Gastrocnemius medialis (tissue), 4 donors: ENCODE measurements at regions of chr14 and their contacts with region 1.

Region 1: DNA sequence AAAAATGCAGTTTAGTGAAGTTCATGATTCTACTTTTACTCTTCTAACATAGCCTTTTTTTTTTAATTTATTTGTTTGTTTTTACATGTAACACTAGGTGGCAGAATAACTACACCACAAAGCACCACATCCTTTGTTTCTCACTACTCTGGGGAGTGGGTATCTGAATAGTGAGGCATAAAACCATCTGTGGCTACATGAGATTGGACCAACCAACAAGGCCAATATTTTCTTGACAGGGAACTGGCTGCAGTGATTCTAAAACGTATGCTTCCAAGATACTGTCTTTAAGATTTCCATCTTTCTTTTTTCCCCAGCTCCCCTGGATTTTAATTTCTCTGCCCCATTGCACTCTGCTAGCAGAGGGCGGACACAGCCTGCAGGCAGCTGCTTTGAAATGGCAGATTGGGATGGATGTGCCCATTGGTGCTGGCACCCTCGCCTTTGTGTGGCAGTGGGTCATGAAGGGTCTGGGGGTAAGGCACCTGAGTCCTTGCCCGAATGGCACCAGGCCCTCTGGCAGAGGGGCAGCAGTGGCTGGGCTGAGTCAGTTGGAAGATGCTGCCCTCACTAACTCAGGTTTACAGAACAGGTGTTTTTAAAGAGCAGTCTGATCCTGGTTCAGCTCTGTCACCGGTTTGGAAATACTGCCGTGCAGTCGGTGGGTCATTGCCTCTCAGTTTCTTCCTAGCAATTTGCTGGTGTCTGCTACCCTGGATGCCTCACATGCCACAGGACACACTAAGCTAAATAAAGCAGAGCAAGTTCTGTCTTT is 429.1 kb downstream of the RAD51B start:
- DNase-seq: peak; percentile 62 to 84
- ATAC-seq: peak; percentile 79 to 85
- H3K4me3 ChIP-seq: no peak overlapping the region
- H3K27ac ChIP-seq: peak overlapping the region; percentile 82 to 87 (median 86)
- H3K4me1 ChIP-seq: peaks cover 64 to 84% of the 10 kb centered on the region in 2 donors
- H3K27me3 ChIP-seq: no peaks in the 10 kb centered on the region
- CTCF ChIP-seq: peak; percentile 60 to 79 (median 70)
- POLR2A ChIP-seq: peak; percentile 10 to 31

Region 2: GRCh38 chr14:68140111-68140741 is 108.4 kb before region 1 on chr14:
- in situ Hi-C with region 1: no loop called
- intact Hi-C with region 1: loop called (anchors 5 kb)
- DNase-seq: peak in 1 of 2 donors; percentile 32
- ATAC-seq: peak; percentile 21 to 35
- H3K4me3 ChIP-seq: no peak overlapping the region
- H3K27ac ChIP-seq: peak overlapping the region; percentile 43 to 70 (median 63)
- H3K4me1 ChIP-seq: peaks cover 48 to 59% of the 10 kb centered on the region in 2 donors
- H3K27me3 ChIP-seq: no peaks in the 10 kb centered on the region
- CTCF ChIP-seq: no peak
- POLR2A ChIP-seq: no peak

Region 3: DNA sequence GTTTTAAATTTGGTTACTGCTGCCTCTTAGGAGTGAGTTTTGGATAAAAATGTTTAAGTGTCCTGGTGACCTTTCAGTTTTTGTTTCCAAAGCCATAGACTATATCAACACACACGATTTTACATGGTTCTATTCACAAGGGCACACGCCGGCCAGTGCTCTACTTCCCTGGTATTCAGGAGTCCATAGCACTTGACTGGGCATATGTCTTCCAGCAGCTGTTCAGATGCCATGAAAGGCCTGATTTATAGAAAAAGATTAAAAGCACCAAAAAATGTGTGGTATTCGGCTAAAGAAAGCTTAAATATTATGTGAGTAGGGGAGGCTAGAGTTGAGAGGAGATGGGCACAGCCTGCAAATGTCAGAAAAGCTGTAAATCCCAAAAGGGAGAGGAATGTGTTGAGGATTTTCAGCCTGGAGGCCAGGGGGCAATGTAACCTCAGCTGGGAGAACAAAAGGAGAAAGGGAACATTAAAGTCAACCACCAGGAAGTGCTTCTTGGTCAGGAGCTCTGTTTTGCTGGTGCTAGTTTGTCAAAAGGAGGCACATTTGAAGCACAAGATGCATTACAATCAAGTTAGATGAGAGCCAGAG is 49.3 kb after region 1 on chr14:
- in situ Hi-C with region 1: no loop called
- intact Hi-C with region 1: no loop called
- DNase-seq: no peak
- ATAC-seq: no peak
- H3K4me3 ChIP-seq: no peak overlapping the region
- H3K27ac ChIP-seq: no peak overlapping the region
- H3K4me1 ChIP-seq: peaks cover 16 to 21% of the 10 kb centered on the region in 2 donors
- H3K27me3 ChIP-seq: no peaks in the 10 kb centered on the region
- CTCF ChIP-seq: no peak
- POLR2A ChIP-seq: no peak

Region 4: GRCh38 chr14:68476212-68476907 is 227.7 kb after region 1 on chr14:
- in situ Hi-C with region 1: no loop called
- intact Hi-C with region 1: loop called (anchors 2 kb)
- DNase-seq: peak; percentile 84 to 89
- ATAC-seq: peak; percentile 95 to 98
- H3K4me3 ChIP-seq: no peak overlapping the region
- H3K27ac ChIP-seq: peak overlapping the region; percentile 84 to 95 (median 86)
- H3K4me1 ChIP-seq: peaks cover 30 to 45% of the 10 kb centered on the region in 2 donors
- H3K27me3 ChIP-seq: no peaks in the 10 kb centered on the region
- CTCF ChIP-seq: no peak
- POLR2A ChIP-seq: peak; percentile 29

Region 5: DNA sequence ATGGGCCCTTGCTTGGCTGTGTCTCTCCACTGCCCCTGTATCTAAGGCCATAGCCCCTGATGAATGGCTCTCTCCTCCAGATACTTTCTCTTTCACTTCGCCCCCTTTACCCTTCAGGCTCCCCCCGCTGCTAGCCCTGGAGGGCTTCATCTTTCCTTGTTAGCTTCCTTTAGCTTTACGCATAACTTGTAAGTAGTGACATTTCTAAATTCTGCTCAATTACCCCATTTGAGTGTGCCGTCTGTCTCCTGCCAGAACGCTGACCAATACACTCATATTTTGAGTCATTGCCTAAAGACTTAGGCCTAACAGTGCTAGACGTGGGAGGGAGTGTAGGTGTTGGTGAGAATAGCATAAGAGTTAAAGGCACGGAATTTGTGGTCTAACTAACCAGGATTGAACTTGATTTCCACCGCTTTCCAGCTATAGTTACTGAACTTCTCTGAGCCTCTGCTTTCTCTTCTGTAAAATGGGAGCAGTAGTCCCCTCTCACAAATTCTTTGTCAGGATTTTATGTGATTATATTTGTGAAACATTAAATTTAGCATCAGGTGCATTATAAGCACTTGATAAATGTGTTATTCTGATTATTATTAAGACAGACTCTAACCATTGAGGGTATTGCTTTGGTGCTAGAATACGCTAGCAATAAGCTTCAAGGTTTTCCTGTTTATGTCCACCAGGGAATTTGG is 414.9 kb after region 1 on chr14:
- in situ Hi-C with region 1: no loop called
- intact Hi-C with region 1: loop called (anchors 5 kb)
- DNase-seq: no peak
- ATAC-seq: no peak
- H3K4me3 ChIP-seq: no peak overlapping the region
- H3K27ac ChIP-seq: peak overlapping the region in 2 of 4 donors; percentile 10 to 11
- H3K4me1 ChIP-seq: peaks cover 11 to 39% of the 10 kb centered on the region in 2 donors
- H3K27me3 ChIP-seq: no peaks in the 10 kb centered on the region
- CTCF ChIP-seq: no peak
- POLR2A ChIP-seq: no peak

Region 6: GRCh38 chr14:68795597-68796417 is 547.1 kb after region 1 on chr14:
- in situ Hi-C with region 1: loop called in 3 of 4 experiments (anchors 5 to 10 kb)
- intact Hi-C with region 1: no loop called
- DNase-seq: peak; percentile 69 to 81
- ATAC-seq: peak; percentile 35 to 42
- H3K4me3 ChIP-seq: peak overlapping the region; percentile 72 to 90 (median 82)
- H3K27ac ChIP-seq: peak overlapping the region; percentile 97 to 100 (median 98)
- H3K4me1 ChIP-seq: peaks cover 0 to 8% of the 10 kb centered on the region in 2 donors
- H3K27me3 ChIP-seq: no peaks in the 10 kb centered on the region
- CTCF ChIP-seq: peak; percentile 92 to 97 (median 96)
- POLR2A ChIP-seq: peak; percentile 79 to 89

Region 7: GRCh38 chr14:68824517-68825347 is 576.1 kb after region 1 on chr14:
- in situ Hi-C with region 1: loop called in 2 of 4 experiments (anchors 5 to 10 kb)
- intact Hi-C with region 1: no loop called
- DNase-seq: peak; percentile 33 to 79
- ATAC-seq: peak; percentile 81 to 93
- H3K4me3 ChIP-seq: no peak overlapping the region
- H3K27ac ChIP-seq: no peak overlapping the region
- H3K4me1 ChIP-seq: peaks cover 0 to 5% of the 10 kb centered on the region in 2 donors
- H3K27me3 ChIP-seq: no peaks in the 10 kb centered on the region
- CTCF ChIP-seq: peak; percentile 70 to 91 (median 81)
- POLR2A ChIP-seq: no peak